OCI-LY7 (cell line): ENCODE measurements at regions of chr21 and their contacts with region 1.

Region 1: GRCh38 chr21:39313571-39314142 is at the start of gene BRWD1:
- DNase-seq: peak; percentile 93
- H3K4me3 ChIP-seq: peak within 1 kb of the TSS; percentile 87
- H3K27ac ChIP-seq: peak within 1 kb of the TSS; percentile 90
- H3K4me1 ChIP-seq: peaks cover 52% of the 10 kb centered on the region
- CTCF ChIP-seq: peak; percentile 52
- total RNA-seq, gene BRWD1: 39.1 and 53.2 TPM in 2 replicates

Region 2: DNA sequence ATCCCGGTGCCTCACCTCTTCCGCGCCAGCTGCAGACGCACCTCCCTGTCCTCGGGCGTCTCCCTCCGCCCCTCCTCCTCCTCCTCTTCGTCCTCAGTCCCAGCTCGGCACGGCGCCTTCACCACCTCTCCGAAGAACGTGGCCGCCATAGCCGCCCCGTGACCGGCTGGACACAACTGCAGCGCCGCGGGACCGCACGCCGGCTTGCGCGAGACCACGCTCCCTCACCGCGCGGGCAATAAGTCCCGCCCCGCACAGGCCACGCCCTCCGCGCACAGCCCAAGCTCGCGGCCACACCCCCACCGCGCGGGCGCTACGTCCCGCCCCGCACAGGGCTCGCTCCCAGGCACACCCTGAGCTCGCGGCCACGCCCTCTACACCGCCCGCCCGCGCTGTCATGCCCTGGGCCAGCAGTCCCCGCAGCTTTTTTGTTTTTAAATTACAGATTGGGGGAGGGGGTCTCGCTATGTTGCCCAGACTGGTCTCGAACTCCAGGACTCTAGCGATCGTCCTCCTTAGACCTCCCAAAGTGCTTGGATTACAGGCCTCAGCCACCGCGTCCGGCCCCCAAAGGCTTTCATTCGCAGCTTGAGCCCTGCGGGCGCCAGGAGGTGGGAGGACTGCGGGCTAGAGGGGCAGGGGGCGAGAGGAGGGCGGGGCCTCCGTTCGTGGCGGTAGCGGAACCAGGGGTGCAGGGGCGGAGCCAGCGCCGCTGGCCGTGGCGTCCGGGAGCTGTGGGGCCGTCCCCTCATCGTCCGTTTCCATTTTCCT is 130.2 kb before region 1 on chr21 and contains the start of gene PSMG1:
- CTCF ChIA-PET with region 1: no interaction called
- POLR2A ChIA-PET with region 1: interaction called, 8 read pairs
- intact Hi-C with region 1: loop called (anchors 1 kb)
- DNase-seq: peak; percentile 95
- H3K4me3 ChIP-seq: peak within 1 kb of the TSS; percentile 96
- H3K27ac ChIP-seq: peak within 1 kb of the TSS; percentile 62
- H3K4me1 ChIP-seq: peaks cover 35% of the 10 kb centered on the region
- CTCF ChIP-seq: no peak
- total RNA-seq, gene PSMG1: 76.9 and 87.2 TPM in 2 replicates

Region 3: DNA sequence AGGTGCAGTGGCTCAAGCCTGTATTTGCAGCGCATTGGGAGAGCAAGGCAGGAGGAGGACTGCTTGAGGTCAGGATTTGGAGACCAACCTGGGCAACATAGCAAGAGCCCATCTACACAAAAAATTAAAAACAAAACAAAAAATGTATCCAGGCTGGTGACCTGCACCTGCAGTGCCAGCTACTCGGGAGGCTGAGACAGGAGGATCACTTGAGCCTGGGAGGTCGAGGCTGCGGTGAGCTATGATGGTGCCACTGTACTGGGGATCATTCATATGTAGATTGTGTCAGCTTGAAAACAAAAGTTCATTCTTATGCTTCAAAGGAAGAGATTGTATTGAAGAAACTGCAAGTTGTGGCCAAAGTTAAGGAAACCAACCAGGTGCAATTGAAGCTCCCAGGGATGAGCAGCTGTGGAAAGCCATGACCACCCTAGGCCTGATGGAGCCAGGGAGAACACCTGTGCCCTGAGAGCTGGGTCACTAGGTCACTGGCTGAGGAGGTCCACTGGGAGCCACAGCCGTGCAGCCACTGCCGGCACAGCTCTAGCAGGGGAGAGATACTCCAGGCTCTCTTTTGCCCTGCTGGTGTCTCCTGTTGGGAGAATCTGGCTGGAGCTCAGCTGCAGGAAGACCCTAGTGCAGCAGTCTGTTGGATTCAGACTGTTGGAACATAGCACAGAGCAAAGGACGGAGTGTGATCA is 13.1 kb after region 1 on chr21:
- CTCF ChIA-PET with region 1: no interaction called
- POLR2A ChIA-PET with region 1: interaction called, 15 read pairs
- intact Hi-C with region 1: no loop called
- DNase-seq: no peak
- H3K4me3 ChIP-seq: no peak overlapping the region
- H3K27ac ChIP-seq: no peak overlapping the region
- H3K4me1 ChIP-seq: peaks cover 41% of the 10 kb centered on the region
- CTCF ChIP-seq: no peak

Region 4: DNA sequence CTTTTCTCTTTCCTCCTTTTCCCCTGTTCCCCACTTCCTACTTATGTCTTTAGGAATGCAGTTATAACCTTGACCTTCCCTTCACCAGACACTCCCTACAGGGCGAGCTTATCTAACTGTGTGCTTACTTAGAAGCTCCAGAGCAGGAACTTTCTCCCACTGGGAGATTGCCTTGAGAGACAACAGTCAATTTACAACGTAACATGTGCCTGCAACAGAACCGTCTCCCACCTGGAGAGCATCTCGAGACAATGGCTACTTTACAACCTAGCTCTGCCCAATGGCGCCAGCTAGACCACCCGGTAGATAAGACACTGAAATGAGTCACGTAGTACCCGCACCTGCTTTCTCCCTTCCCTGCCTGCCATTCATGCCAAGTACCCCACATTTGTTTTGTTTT is 18.5 kb after region 1 on chr21:
- CTCF ChIA-PET with region 1: no interaction called
- POLR2A ChIA-PET with region 1: interaction called, 15 read pairs
- intact Hi-C with region 1: no loop called
- DNase-seq: no peak
- H3K4me3 ChIP-seq: no peak overlapping the region
- H3K27ac ChIP-seq: no peak overlapping the region
- H3K4me1 ChIP-seq: peaks cover 27% of the 10 kb centered on the region
- CTCF ChIP-seq: no peak

Region 5: DNA sequence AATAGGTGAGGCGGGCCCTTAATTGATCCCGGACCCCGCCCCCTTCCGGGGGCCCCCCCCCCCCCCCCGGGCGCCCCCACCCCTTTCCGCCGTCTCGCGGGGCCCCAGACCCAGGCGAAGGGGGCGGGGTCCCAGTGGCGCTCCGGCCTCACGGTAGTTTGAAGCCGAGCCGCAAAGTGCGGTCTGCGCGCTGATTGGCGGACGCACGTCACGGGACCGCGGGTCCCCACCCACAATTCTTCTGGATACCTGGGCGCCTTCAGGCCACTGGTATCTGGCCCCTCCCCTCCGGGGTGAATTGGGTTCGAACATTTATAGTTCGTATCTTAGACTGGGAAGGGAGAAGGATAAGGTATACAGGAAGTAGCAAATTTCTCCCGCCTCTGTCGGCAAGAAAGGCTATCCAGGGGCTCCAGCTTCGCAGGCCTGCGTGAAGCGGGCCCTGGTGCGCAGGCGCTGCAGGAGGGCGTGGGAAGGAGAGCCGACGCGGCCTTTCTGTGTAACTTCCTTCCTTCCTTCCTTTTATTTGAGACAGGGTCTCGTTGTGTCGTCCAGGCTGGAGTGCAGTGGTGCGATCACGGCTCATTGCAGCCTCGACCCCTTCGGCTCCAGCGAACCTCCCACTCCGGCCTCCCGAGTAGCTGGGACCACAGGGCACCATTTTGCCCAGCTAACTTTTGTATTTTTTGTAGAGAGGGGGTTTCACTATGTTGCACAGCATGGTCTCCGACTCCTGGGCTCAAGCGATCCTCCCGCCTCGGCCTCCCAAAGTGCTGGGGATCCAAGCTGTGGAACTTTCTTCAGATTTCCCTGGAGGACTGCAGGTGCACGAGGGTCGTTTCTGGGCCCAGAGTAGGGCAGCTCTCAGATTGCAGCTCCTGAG is 35.8 kb after region 1 on chr21:
- CTCF ChIA-PET with region 1: no interaction called
- POLR2A ChIA-PET with region 1: interaction called, 50 read pairs
- intact Hi-C with region 1: loop called (anchors 1 kb)
- DNase-seq: peak; percentile 98
- H3K4me3 ChIP-seq: peak overlapping the region; percentile 83
- H3K27ac ChIP-seq: peak overlapping the region; percentile 72
- H3K4me1 ChIP-seq: peaks cover 36% of the 10 kb centered on the region
- CTCF ChIP-seq: no peak

Region 6: GRCh38 chr21:39388038-39388810 is 74.6 kb after region 1 on chr21:
- CTCF ChIA-PET with region 1: interaction called, 5 read pairs
- POLR2A ChIA-PET with region 1: interaction called, 19 read pairs
- intact Hi-C with region 1: loop called (anchors 1 kb)
- DNase-seq: peak; percentile 84
- H3K4me3 ChIP-seq: peak overlapping the region; percentile 68
- H3K27ac ChIP-seq: peak overlapping the region; percentile 64
- H3K4me1 ChIP-seq: peaks cover 22% of the 10 kb centered on the region
- CTCF ChIP-seq: peak; percentile 94